ENCODE measurements at regions of chr7 and their contacts with region 1.

Region 1: GRCh38 chr7:73865738-73866445 is 4.9 kb downstream of the TMEM270 start:
- DNase-seq: no peak
- H3K4me3 ChIP-seq: no peak overlapping the region
- H3K27ac ChIP-seq: no peak overlapping the region
- H3K4me1 ChIP-seq: no peaks in the 10 kb centered on the region
- H3K27me3 ChIP-seq: no peaks in the 10 kb centered on the region
- CTCF ChIP-seq: peak; percentile 50 to 79

Region 2: GRCh38 chr7:73738612-73739374 is 127.1 kb before region 1 on chr7 and contains the start of gene ABHD11:
- CTCF ChIA-PET with region 1: no interaction called
- dilution Hi-C with region 1: no loop called
- in situ Hi-C with region 1: no loop called
- intact Hi-C with region 1: no loop called
- DNase-seq: peak; percentile 96
- H3K4me3 ChIP-seq: peak within 1 kb of the TSS; percentile 59 to 84 (median 73)
- H3K27ac ChIP-seq: peak within 1 kb of the TSS; percentile 82
- H3K4me1 ChIP-seq: peaks cover 9% of the 10 kb centered on the region
- H3K27me3 ChIP-seq: no peaks in the 10 kb centered on the region
- CTCF ChIP-seq: no peak
- total RNA-seq, gene ABHD11: 6.7 to 23.6 TPM

Region 3: DNA sequence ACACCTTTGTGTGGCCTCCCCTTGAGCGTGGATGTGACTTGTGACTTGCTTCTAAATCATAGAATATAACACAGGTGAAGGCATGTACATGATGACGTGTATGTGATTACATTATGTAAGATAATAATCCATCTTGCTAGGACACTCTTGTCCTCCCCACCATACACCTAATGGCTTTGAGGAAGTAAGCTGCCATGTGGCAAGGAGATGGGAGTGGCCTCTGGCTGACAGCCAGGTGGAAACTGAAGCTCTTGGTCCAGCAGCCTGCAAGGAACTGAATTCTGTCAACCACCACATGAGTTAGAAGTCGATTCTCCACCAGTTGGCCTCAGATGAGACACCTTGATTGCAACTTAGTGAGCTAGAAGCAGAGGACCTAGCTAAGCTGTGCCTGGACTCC is 94.7 kb after region 1 on chr7:
- CTCF ChIA-PET with region 1: interaction called, 4 read pairs
- dilution Hi-C with region 1: loop called (anchors 10 kb)
- in situ Hi-C with region 1: no loop called
- intact Hi-C with region 1: no loop called
- DNase-seq: no peak
- H3K4me3 ChIP-seq: no peak overlapping the region
- H3K27ac ChIP-seq: no peak overlapping the region
- H3K4me1 ChIP-seq: no peaks in the 10 kb centered on the region
- H3K27me3 ChIP-seq: no peaks in the 10 kb centered on the region
- CTCF ChIP-seq: no peak

Region 4: GRCh38 chr7:74026903-74027551 is 161.1 kb after region 1 on chr7:
- CTCF ChIA-PET with region 1: interaction called, 7 read pairs
- dilution Hi-C with region 1: no loop called
- in situ Hi-C with region 1: loop called (anchors 10 kb)
- intact Hi-C with region 1: loop called (anchors 1 kb)
- DNase-seq: peak; percentile 21
- H3K4me3 ChIP-seq: no peak overlapping the region
- H3K27ac ChIP-seq: no peak overlapping the region
- H3K4me1 ChIP-seq: peaks cover 8% of the 10 kb centered on the region
- H3K27me3 ChIP-seq: no peaks in the 10 kb centered on the region
- CTCF ChIP-seq: peak; percentile 90

Region 5: DNA sequence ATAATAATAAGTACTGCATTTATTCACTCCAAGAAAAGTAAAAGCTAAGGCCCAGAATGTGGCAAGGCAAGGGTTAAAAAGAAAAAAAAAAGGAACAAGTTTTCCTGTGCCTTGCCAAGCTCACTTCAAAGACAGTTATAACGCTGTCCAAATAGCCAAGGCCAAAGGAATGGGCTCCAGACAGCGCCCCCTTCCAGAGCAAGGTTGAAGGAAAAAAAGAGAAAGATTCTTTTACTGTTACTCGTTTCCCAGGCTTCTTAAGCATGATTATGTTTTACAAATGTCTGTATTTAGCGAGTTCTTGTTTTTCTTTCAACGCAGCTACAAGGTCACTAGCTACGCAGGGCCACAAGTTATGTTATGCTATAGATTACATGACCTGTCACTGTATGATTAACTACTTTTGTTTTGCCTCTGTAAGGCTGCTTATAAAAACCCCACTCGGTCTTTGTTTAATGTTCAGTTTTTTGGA is 299.1 kb after region 1 on chr7:
- CTCF ChIA-PET with region 1: no interaction called
- dilution Hi-C with region 1: no loop called
- in situ Hi-C with region 1: no loop called
- intact Hi-C with region 1: no loop called
- DNase-seq: no peak
- H3K4me3 ChIP-seq: no peak overlapping the region
- H3K27ac ChIP-seq: no peak overlapping the region
- H3K4me1 ChIP-seq: no peaks in the 10 kb centered on the region
- H3K27me3 ChIP-seq: no peaks in the 10 kb centered on the region
- CTCF ChIP-seq: peak in 1 of 2 donors; percentile 28

Region 6: GRCh38 chr7:74183613-74184450 is 317.9 kb after region 1 on chr7:
- CTCF ChIA-PET with region 1: no interaction called
- dilution Hi-C with region 1: no loop called
- in situ Hi-C with region 1: loop called in 1 of 2 experiments (anchors 25 kb)
- intact Hi-C with region 1: loop called (anchors 5 kb)
- DNase-seq: no peak
- H3K4me3 ChIP-seq: no peak overlapping the region
- H3K27ac ChIP-seq: peak overlapping the region; percentile 22
- H3K4me1 ChIP-seq: peaks cover 58% of the 10 kb centered on the region
- H3K27me3 ChIP-seq: no peaks in the 10 kb centered on the region
- CTCF ChIP-seq: peak in 1 of 2 donors; percentile 55

Region 7: GRCh38 chr7:74217455-74218342 is 351.8 kb after region 1 on chr7:
- CTCF ChIA-PET with region 1: no interaction called
- dilution Hi-C with region 1: no loop called
- in situ Hi-C with region 1: no loop called
- intact Hi-C with region 1: no loop called
- DNase-seq: no peak
- H3K4me3 ChIP-seq: no peak overlapping the region
- H3K27ac ChIP-seq: no peak overlapping the region
- H3K4me1 ChIP-seq: no peaks in the 10 kb centered on the region
- H3K27me3 ChIP-seq: no peaks in the 10 kb centered on the region
- CTCF ChIP-seq: no peak

Region 8: DNA sequence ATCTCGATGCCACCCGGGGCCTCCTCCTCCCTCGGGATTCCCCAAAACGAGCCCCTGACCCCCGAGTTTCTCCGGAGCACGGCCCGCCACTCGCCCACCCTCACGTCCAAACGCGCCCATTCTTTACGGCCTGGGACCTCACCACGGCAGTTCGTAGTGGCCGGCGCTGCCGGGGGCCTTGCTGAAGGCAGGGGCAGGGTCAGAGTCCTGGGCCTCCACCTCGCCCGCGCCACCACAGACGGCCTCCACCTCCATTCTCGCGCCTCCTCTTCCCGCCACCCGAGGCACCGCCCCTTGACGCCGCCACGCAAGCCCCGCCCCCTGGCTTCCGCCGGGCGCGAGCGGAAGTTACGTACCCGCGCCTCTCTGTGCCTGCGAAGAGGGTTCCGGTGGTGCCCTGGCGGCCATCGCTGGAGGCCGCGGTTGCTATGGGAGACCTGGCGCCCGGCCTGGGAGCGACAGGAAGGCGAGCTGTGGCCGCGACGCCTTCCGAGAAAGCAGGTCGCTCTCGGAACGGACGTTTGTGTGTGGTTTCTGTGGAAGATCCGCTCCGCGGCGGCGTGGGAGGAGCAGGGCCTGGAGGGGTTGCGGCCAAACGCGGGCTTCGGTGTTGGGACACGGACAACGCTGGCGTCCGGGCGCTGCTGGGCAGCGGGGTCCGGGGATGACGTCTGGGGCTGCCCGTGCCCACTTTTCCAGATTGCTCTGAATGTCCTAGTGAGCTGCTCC is 388.4 kb after region 1 on chr7 and contains the start of gene RFC2:
- CTCF ChIA-PET with region 1: no interaction called
- dilution Hi-C with region 1: no loop called
- in situ Hi-C with region 1: no loop called
- intact Hi-C with region 1: loop called (anchors 2 kb)
- DNase-seq: peak; percentile 95
- H3K4me3 ChIP-seq: peak within 1 kb of the TSS; percentile 81 to 97 (median 88)
- H3K27ac ChIP-seq: peak within 1 kb of the TSS; percentile 91
- H3K4me1 ChIP-seq: peaks cover 8% of the 10 kb centered on the region
- H3K27me3 ChIP-seq: no peaks in the 10 kb centered on the region
- CTCF ChIP-seq: no peak
- total RNA-seq, gene RFC2: 15.0 to 43.9 TPM